ENCODE measurements at regions of chr2 and their contacts with region 1.

Region 1: DNA sequence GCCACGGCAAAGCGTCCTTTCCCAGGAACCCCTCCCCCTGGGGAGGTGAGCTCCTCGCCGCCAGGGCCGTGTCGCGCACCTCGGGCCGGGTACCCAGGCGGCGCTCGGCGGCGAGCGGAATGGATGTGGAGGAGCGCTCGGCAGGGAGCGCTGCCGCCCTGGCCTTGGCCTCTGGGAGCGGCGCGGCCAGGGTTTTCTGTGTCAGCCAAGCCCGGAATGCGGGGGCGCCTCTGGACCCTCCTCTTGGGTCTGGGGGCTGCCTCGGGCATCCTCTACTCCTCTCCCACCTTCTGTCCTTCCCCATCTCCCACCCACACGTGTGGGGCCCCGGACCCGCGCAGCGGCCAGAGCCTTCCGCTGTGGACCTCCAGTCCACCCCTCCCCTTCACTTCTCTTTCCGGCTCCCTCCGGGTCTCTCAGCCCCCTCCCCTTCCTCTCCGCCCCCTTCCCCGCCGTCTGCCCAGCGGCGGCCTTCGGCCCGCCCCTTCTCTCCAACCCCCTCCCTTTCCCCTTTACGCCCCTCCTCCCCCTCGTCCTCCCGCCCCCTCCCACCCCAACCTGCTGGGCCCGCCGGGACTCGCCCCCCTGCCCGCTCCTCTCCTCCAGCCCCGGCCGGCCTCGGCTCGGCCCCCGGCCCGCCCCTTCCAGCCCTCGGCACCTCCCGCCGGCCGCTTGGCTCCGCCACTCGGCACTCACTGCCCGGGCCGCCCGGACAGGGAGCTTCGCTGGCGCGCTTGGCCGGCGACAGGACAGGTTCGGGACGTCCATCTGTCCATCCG is at the start of gene MERTK:
- DNase-seq: peak; percentile 89
- ATAC-seq: peak; percentile 91
- H3K4me3 ChIP-seq: peak within 1 kb of the TSS; percentile 90 to 99 (median 94)
- H3K27ac ChIP-seq: peak within 1 kb of the TSS; percentile 82
- H3K4me1 ChIP-seq: peaks cover 61% of the 10 kb centered on the region
- H3K27me3 ChIP-seq: no peaks in the 10 kb centered on the region; a peak in 1 of 5 replicates
- CTCF ChIP-seq: peak; percentile 96
- EP300 ChIP-seq: no peak; a peak in 1 of 4 replicates
- POLR2A ChIP-seq: peak; percentile 90 to 92
- RAD21 ChIP-seq: peak; percentile 98
- total RNA-seq, gene MERTK: 22.5 and 37.3 TPM in 2 replicates

Region 2: DNA sequence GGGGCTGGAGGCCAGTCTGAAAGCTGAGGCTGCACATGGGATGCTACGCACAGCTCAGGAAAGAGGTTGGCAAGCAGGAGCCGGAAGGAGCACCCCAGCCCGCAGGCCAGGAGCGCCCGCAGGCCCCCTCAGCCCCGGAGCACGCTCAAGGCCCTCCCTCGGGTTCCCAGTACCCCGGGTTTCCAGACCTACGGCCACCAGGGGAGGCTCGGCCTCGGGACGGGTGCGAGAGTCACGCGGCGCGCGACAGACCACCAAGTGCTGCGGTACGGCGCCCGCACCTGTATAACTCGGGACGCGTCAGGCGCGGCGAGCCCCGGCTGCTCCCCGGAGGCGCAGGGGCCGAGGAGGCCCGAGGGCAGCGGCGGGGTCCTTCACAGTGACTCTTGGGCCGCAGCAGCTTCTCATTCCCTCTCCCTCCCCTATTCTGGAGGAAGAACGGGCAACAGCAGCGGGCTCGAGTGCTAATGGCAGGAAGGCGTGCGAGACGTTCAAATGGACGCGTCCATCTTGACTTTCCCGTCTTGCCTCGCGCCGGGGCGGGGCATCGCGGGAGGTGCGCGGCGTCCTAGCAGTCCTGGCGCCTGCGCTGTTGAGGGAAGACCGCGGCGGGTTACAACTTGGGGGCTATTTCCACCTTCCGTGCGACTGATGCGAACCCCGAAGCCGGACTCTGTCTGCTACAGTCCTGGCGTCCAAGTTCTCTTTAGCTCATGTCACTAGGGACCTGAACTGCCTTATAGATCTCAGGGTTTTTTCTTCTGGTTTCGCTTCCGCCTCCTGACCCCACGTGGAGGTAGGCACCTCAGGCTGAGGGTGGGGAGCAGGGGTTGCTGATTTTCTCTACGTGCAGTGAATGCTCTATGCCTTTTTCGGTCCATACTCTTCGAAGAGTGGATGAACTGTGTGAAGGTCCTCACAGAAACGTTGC is 14.2 kb before region 1 on chr2 and contains the start of gene ANAPC1:
- CTCF ChIA-PET with region 1: interaction called, 8 read pairs
- POLR2A ChIA-PET with region 1: interaction called, 26 read pairs
- in situ Hi-C with region 1: no loop called
- intact Hi-C with region 1: no loop called
- DNase-seq: peak; percentile 85
- ATAC-seq: peak; percentile 96
- H3K4me3 ChIP-seq: peak within 1 kb of the TSS; percentile 89 to 97 (median 96)
- H3K27ac ChIP-seq: peak within 1 kb of the TSS; percentile 87
- H3K4me1 ChIP-seq: peaks cover 26% of the 10 kb centered on the region
- H3K27me3 ChIP-seq: no peaks in the 10 kb centered on the region; a peak in 1 of 5 replicates
- CTCF ChIP-seq: peak; percentile 15
- EP300 ChIP-seq: no peak; a peak in 1 of 4 replicates
- POLR2A ChIP-seq: peak; percentile 97 to 99
- RAD21 ChIP-seq: peak; percentile 53
- total RNA-seq, gene ANAPC1: 89.7 and 109 TPM in 2 replicates

Region 3: GRCh38 chr2:111919794-111920608 is 21.9 kb after region 1 on chr2:
- CTCF ChIA-PET with region 1: no interaction called
- POLR2A ChIA-PET with region 1: interaction called, 17 read pairs
- in situ Hi-C with region 1: no loop called
- intact Hi-C with region 1: loop called (anchors 2 kb)
- DNase-seq: peak; percentile 94
- ATAC-seq: peak; percentile 96
- H3K4me3 ChIP-seq: peak overlapping the region; percentile 3 to 58 (median 15)
- H3K27ac ChIP-seq: peak overlapping the region; percentile 87
- H3K4me1 ChIP-seq: peaks cover 44% of the 10 kb centered on the region
- H3K27me3 ChIP-seq: no peaks in the 10 kb centered on the region
- CTCF ChIP-seq: peak; percentile 50
- EP300 ChIP-seq: peak in 1 of 2 experiments; percentile 76; a peak in 2 of 4 replicates
- POLR2A ChIP-seq: peak; percentile 84 to 91
- RAD21 ChIP-seq: peak; percentile 37

Region 4: GRCh38 chr2:111946294-111947114 is 48.4 kb after region 1 on chr2:
- CTCF ChIA-PET with region 1: no interaction called
- POLR2A ChIA-PET with region 1: interaction called, 18 read pairs
- in situ Hi-C with region 1: no loop called
- intact Hi-C with region 1: no loop called
- DNase-seq: peak; percentile 70
- ATAC-seq: peak; percentile 35
- H3K4me3 ChIP-seq: no peak overlapping the region
- H3K27ac ChIP-seq: peak overlapping the region; percentile 67
- H3K4me1 ChIP-seq: peaks cover 74% of the 10 kb centered on the region
- H3K27me3 ChIP-seq: no peaks in the 10 kb centered on the region
- CTCF ChIP-seq: no peak
- EP300 ChIP-seq: 0 out of 4 replicates have a peak, but pooled peaks of 1 of the 2 experiments have one; percentile 4
- POLR2A ChIP-seq: no peak
- RAD21 ChIP-seq: no peak

Region 5: GRCh38 chr2:111986116-111986900 is 88.2 kb after region 1 on chr2:
- CTCF ChIA-PET with region 1: no interaction called
- POLR2A ChIA-PET with region 1: interaction called, 33 read pairs
- in situ Hi-C with region 1: no loop called
- intact Hi-C with region 1: loop called (anchors 1 kb)
- DNase-seq: peak; percentile 63
- ATAC-seq: peak; percentile 89
- H3K4me3 ChIP-seq: no peak overlapping the region
- H3K27ac ChIP-seq: peak overlapping the region; percentile 53
- H3K4me1 ChIP-seq: peaks cover 48% of the 10 kb centered on the region
- H3K27me3 ChIP-seq: no peaks in the 10 kb centered on the region
- CTCF ChIP-seq: 0 out of 2 replicates have a peak, but pooled peaks have one; percentile 8
- EP300 ChIP-seq: no peak
- POLR2A ChIP-seq: no peak
- RAD21 ChIP-seq: no peak

Region 6: GRCh38 chr2:112054847-112055729 is 157.0 kb after region 1 on chr2 and contains the start of gene TMEM87B:
- CTCF ChIA-PET with region 1: no interaction called
- POLR2A ChIA-PET with region 1: interaction called, 29 read pairs
- in situ Hi-C with region 1: loop called (anchors 5 kb)
- intact Hi-C with region 1: no loop called
- DNase-seq: peak; percentile 91
- ATAC-seq: peak; percentile 80
- H3K4me3 ChIP-seq: peak within 1 kb of the TSS; percentile 92 to 97 (median 95)
- H3K27ac ChIP-seq: peak within 1 kb of the TSS; percentile 95
- H3K4me1 ChIP-seq: peaks cover 38% of the 10 kb centered on the region
- H3K27me3 ChIP-seq: no peaks in the 10 kb centered on the region; a peak in 1 of 5 replicates
- CTCF ChIP-seq: peak; percentile 28; the same call in 1 of the 2 replicates
- EP300 ChIP-seq: no peak
- POLR2A ChIP-seq: peak; percentile 74 to 93
- RAD21 ChIP-seq: peak; percentile 60; the same call in 1 of the 2 replicates
- total RNA-seq, gene TMEM87B: 9.9 and 15.1 TPM in 2 replicates